Activated CD8-positive, alpha-beta T cell treated with anti-CD3 and anti-CD28 coated beads for 36 hours (primary cell): ENCODE measurements at regions of chr19 and their contacts with region 1.

Region 1: DNA sequence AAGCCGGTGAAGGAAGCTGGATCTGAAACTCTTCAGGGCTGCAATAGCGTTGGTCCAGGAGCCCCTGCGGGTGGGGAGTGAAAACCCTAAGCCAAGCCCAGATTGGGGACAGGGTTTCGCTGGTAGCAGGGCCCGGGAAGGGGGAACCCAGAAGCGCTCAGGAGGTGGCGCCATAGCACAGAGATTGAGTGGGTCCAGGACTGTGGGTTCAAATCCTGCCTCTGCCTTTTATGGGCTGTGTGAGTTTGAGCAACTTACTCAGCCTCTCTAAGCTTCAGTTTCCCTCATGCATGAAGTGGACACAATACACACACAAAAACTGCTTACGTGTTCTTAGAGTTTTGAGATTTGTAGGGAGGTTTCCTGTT is 8.3 kb upstream of the SYCN start:
- DNase-seq: peak; percentile 85
- ATAC-seq: peak; percentile 98
- H3K4me3 Mint-ChIP-seq: no peak overlapping the region
- H3K27ac Mint-ChIP-seq: no peak overlapping the region
- H3K4me1 Mint-ChIP-seq: no peaks in the 10 kb centered on the region
- H3K27me3 Mint-ChIP-seq: peaks cover 5% of the 10 kb centered on the region
- CTCF ChIP-seq: peak; percentile 68

Region 2: GRCh38 chr19:39264306-39265290 is 52.2 kb after region 1 on chr19:
- CTCF ChIA-PET with region 1: no interaction called
- POLR2A ChIA-PET with region 1: no interaction called
- intact Hi-C with region 1: no loop called
- DNase-seq: no peak
- ATAC-seq: no peak
- H3K4me3 Mint-ChIP-seq: no peak overlapping the region
- H3K27ac Mint-ChIP-seq: no peak overlapping the region
- H3K4me1 Mint-ChIP-seq: peaks cover 2% of the 10 kb centered on the region
- H3K27me3 Mint-ChIP-seq: peaks cover 31% of the 10 kb centered on the region
- CTCF ChIP-seq: no peak

Region 3: DNA sequence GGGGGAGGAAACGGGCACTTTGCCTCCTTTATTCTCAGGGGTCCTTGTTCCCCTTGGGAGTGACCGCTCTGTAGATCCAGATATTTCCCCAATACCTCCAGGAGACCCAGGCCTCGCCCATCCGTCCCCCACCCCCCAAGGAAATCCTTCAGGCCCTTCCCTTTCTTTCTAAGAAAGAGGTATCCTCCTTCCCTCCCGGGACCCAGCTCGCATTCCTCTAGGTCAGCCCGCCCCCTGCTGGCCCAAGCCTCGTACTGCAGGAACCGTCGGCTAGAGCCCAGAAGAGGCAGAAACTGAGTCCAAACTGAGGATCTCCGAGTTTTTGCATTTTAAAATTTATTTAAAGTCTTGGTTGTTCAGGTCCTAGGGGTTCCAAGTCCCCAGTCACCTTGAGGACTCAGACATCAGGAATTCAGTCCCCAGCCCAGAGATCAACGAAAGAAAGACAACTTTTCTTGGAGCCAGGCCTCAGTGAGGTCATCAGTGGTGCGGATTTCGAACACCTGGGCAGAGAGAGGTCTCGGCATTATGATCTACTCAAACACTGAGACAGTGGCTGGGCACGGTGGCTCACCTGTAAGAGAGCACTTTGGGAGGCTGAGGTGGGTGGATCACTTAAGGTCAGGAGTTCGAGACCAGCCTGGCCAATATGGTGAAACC is 115.8 kb after region 1 on chr19:
- CTCF ChIA-PET with region 1: interaction called, 15 read pairs
- POLR2A ChIA-PET with region 1: no interaction called
- intact Hi-C with region 1: loop called (anchors 5 kb)
- DNase-seq: peak; percentile 88
- ATAC-seq: peak; percentile 86
- H3K4me3 Mint-ChIP-seq: no peak overlapping the region
- H3K27ac Mint-ChIP-seq: peak overlapping the region; percentile 66
- H3K4me1 Mint-ChIP-seq: peaks cover 38% of the 10 kb centered on the region
- H3K27me3 Mint-ChIP-seq: no peaks in the 10 kb centered on the region
- CTCF ChIP-seq: peak; percentile 97

Region 4: GRCh38 chr19:39335168-39335548 is 122.8 kb after region 1 on chr19:
- CTCF ChIA-PET with region 1: interaction called, 11 read pairs
- POLR2A ChIA-PET with region 1: no interaction called
- intact Hi-C with region 1: no loop called
- DNase-seq: peak; percentile 63
- ATAC-seq: peak; percentile 40
- H3K4me3 Mint-ChIP-seq: peak overlapping the region; percentile 97
- H3K27ac Mint-ChIP-seq: peak overlapping the region; percentile 99
- H3K4me1 Mint-ChIP-seq: peaks cover 52% of the 10 kb centered on the region
- H3K27me3 Mint-ChIP-seq: no peaks in the 10 kb centered on the region
- CTCF ChIP-seq: no peak